ENCODE measurements at regions of chr5 and their contacts with region 1.

Region 1: DNA sequence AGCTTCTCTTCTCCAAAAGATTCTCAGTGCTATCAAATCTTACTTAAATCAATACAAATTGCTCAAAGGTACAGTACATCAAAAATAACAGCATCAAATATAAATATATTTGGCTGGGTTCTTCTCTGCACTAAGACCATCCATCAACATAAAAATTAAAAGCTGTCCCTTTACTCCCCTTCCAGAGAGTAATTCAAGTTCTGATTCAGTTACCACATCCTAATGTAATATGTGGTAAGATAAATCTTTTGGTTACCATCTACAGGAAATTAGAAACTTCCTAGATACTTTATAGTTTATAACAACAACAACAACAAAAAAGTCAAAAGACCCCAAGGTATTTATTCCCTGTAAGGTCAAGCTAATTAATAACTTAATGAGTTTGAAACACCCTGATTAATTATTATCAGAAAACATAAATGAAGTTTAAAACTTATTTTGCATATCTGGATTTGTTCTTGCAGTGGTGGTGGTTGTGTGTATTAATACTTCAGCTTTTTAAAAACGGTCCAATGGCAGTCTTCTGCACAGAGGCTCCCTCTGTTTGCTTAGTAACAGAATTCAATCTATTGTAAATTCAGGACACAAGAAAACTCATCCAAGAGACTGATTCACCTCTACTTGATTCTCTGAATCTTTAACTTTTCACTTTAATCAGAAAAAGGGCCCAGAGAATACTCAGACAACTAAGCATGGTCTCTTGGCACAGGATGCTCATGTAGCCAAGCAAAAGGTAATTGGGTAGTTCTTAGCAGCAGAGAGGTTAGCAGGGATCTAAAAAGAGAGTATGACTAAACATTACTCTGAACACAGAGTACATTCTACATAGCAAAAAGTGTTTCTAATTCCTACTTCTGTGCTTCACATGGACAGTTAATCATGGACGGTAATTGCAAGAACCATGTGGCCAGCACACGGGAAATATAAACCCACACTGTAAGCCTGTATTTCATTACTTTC is 20.1 kb downstream of the DIAPH1 start:
- DNase-seq: no peak
- ATAC-seq: peak; percentile 36
- H3K4me3 ChIP-seq: no peak overlapping the region
- H3K4me1 ChIP-seq: no peaks in the 10 kb centered on the region
- CTCF ChIP-seq: no peak

Region 2: DNA sequence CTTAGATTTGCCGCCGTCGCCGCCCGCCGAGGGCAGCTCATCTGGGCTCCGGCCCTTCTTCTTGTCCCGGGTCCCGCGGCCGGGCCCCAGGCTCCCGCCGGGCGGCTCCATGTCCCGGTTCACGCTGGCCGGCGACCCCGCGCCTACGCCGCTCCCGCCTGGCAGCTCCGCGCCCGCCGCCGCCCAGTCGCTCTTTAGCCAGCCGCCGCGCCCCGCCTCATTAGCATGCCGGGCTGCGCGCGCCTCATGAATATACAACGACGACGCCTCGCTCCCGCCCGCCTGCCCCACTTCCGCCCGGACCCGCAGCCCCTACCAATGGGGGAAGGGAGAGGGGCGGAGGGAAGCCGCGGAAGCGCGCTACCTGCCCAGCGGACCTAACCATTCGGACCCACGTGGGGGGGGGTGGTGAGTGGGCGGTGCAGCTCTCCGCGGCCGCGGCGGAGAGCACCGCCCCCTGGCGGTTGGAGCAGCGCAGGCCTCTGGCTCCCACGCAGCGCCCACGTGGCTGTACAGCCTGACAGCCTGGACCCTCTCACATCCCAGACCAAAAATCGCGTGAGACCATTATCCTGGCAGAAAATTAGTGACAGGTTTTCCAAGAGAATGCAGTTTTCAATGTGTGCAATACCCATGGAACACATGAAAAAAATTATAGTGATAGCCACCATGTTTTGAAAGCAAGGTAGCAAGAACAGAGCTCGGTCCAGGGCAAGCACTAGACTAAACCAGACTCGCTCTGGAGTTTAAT is 20.3 kb after region 1 on chr5 and contains the start of gene DIAPH1:
- intact Hi-C with region 1: loop called in 1 of 2 experiments (anchors 2 kb)
- DNase-seq: peak; percentile 98 to 99 (median 98)
- ATAC-seq: peak; percentile 97
- H3K4me3 ChIP-seq: peak within 1 kb of the TSS; percentile 92
- H3K4me1 ChIP-seq: peaks cover 3% of the 10 kb centered on the region
- CTCF ChIP-seq: peak; percentile 95
- total RNA-seq, gene DIAPH1: 53.3 to 87.7 (median 82.7) TPM